Activated B cell treated with CpG ODN at 0.5 μM for 24 hours (primary cell): ENCODE measurements at regions of chr10 and their contacts with region 1.

Region 1: GRCh38 chr10:7410862-7411670 is at the start of gene SFMBT2:
- DNase-seq: peak; percentile 52
- ATAC-seq: peak; percentile 59
- H3K4me3 Mint-ChIP-seq: peak within 1 kb of the TSS; percentile 95
- H3K27ac Mint-ChIP-seq: peak within 1 kb of the TSS; percentile 71
- H3K4me1 Mint-ChIP-seq: peaks cover 36% of the 10 kb centered on the region
- H3K27me3 Mint-ChIP-seq: peaks cover 5% of the 10 kb centered on the region
- CTCF ChIP-seq: no peak
- total RNA-seq, gene SFMBT2: 18.7 and 19.2 TPM in 2 replicates

Region 2: DNA sequence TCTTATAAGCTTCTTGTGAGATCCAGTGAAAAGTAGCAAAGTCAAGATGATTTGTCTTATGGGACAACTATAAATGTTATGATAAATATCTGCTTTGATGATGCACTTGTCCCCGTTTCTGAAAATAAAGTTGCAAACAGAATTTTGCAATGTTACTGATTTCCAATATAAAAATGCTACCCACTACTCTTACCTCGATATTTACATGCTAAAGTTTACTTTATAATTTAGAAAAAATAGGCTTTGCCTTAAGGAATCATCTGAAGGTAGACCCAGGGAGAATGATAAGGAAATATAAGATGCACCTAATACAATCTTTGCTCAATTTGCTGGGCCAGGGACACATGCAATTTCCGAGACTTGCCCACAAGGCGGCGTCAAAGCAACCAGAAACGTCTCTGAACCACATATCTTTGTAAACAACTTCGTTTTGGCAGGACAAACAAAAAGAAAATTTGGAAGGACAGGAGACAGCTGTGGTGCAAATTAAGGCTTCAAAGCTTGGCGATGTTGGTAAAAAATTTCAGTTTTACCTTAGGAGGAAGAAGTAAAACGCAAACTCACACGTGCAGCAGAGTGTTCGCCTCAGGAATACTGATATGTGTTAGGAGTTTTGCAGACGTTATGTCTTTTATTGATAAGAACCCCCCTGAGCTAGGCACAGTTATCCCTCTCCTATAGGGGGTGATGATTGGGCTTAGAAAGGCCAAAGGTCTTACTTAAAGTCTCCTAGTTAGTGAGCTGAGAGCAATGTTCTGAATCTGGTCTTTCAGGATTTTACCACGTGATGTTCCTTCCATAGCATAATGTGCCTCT is 965.4 kb before region 1 on chr10:
- CTCF ChIA-PET with region 1: no interaction called
- POLR2A ChIA-PET with region 1: no interaction called
- intact Hi-C with region 1: loop called (anchors 10 kb)
- DNase-seq: no peak
- ATAC-seq: no peak
- H3K4me3 Mint-ChIP-seq: no peak overlapping the region
- H3K27ac Mint-ChIP-seq: no peak overlapping the region
- H3K4me1 Mint-ChIP-seq: peaks cover 2% of the 10 kb centered on the region
- H3K27me3 Mint-ChIP-seq: peaks cover 12% of the 10 kb centered on the region
- CTCF ChIP-seq: no peak

Region 3: GRCh38 chr10:6713716-6714115 is 697.4 kb before region 1 on chr10:
- CTCF ChIA-PET with region 1: no interaction called
- POLR2A ChIA-PET with region 1: no interaction called
- intact Hi-C with region 1: no loop called
- DNase-seq: no peak
- ATAC-seq: no peak
- H3K4me3 Mint-ChIP-seq: no peak overlapping the region
- H3K27ac Mint-ChIP-seq: no peak overlapping the region
- H3K4me1 Mint-ChIP-seq: no peaks in the 10 kb centered on the region
- H3K27me3 Mint-ChIP-seq: peaks cover 37% of the 10 kb centered on the region
- CTCF ChIP-seq: no peak

Region 4: DNA sequence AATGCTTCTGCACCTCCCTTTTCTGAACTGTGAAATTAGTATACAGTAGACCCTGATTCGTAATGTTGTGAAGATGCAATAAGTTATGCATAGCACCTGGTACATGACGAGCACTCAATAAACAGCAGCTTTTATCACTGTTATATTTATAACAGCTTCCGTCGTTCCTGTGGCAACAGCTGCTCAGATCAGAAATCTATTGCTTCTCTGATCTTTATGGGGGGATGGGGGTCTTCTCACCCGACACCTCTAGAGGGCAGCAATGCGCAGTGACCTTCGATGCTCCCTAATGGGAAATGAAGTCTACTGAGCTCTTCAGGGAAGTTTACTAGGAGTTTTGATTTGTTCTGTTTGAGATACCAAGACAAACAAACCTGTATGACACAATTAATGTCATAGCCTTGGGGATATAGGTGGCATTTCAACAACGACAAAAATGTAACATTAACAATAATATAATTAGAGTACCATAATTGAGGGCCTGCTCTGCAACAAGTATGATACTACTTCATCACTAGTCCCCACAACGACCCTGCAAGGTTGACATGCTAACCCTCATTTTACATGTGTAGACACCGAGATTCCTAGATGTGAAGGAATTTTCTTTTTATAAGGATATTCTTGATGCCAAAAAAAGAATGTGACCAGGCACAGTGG is 289.8 kb before region 1 on chr10:
- CTCF ChIA-PET with region 1: interaction called, 26 read pairs
- POLR2A ChIA-PET with region 1: no interaction called
- intact Hi-C with region 1: loop called (anchors 1 kb)
- DNase-seq: peak; percentile 43
- ATAC-seq: peak; percentile 85
- H3K4me3 Mint-ChIP-seq: no peak overlapping the region
- H3K27ac Mint-ChIP-seq: no peak overlapping the region
- H3K4me1 Mint-ChIP-seq: peaks cover 6% of the 10 kb centered on the region
- H3K27me3 Mint-ChIP-seq: peaks cover 3% of the 10 kb centered on the region
- CTCF ChIP-seq: peak; percentile 42

Region 5: DNA sequence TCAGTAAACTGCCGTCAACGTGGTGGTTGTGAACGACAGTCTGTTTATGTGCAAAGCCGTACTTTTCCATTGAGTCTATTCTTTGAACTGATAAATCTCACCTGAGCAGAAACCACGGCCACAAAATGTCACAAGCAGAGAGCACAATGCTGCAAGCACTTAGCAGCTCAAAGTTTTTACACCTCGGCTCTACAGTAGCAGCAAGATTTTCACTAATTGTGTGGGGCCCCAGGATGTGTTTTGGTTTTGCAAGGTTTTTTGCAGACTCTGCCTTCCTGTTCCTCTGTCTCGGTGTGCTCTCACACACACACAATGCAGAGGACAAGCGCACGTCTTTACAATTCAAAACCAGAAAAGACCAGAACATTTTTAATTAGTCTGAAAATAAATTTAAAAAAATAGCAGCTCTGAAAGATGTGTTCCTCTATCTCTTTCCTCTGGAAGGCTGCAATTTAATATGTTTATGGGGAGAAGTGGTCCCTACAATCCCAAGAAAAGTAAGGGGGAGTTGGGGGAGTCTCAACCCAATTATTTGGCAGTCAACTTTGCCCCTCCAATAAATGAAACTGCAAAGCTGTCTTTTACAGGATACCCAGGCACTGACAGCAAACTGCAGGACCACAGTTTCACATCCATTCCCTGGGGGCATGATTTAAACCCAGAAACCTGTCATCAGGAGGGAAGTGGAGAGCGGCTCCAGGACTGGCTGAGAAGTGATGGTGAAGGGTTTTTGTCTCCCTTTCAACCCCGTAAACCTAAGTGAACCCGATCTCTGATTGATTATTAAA is 73.6 kb after region 1 on chr10:
- CTCF ChIA-PET with region 1: no interaction called
- POLR2A ChIA-PET with region 1: interaction called, 6 read pairs
- intact Hi-C with region 1: loop called (anchors 2 kb)
- DNase-seq: no peak
- ATAC-seq: peak; percentile 32
- H3K4me3 Mint-ChIP-seq: peak overlapping the region; percentile 76
- H3K27ac Mint-ChIP-seq: peak overlapping the region; percentile 53
- H3K4me1 Mint-ChIP-seq: peaks cover 64% of the 10 kb centered on the region
- H3K27me3 Mint-ChIP-seq: no peaks in the 10 kb centered on the region
- CTCF ChIP-seq: no peak

Region 6: DNA sequence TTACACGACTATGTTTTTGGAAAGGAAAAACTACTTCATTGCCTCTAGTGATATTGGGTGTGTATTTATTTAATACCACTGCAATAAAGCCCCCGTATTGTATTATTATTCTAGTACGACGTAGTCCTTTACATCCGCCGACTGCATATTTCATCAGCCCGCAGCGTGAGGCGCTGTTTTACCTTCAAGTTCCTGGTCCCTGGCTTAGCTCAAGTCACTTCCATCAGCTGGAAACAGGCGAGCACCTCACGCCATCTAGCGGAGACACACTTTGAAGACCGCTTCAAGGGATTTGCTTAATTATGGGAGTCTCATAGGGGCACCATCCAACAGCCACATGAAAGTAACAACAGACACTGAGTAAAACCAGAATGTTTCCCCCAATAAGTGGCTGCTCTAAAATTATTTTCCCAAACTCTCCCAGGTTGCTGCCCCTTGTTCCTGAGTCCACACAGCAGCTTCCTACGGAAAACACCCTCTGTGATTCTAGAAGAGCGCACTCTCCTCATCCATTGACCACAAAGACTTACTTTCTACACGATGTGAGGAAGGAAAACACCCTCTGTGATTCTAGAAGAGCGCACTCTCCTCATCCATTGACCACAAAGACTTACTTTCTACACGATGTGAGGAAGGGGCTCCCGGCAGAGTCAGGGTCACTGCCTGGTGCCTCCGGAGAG is 276.3 kb after region 1 on chr10:
- CTCF ChIA-PET with region 1: interaction called, 7 read pairs
- POLR2A ChIA-PET with region 1: no interaction called
- intact Hi-C with region 1: loop called (anchors 2 kb)
- DNase-seq: peak; percentile 43
- ATAC-seq: peak; percentile 89
- H3K4me3 Mint-ChIP-seq: no peak overlapping the region
- H3K27ac Mint-ChIP-seq: no peak overlapping the region
- H3K4me1 Mint-ChIP-seq: peaks cover 4% of the 10 kb centered on the region
- H3K27me3 Mint-ChIP-seq: peaks cover 23% of the 10 kb centered on the region
- CTCF ChIP-seq: peak; percentile 35

Region 7: DNA sequence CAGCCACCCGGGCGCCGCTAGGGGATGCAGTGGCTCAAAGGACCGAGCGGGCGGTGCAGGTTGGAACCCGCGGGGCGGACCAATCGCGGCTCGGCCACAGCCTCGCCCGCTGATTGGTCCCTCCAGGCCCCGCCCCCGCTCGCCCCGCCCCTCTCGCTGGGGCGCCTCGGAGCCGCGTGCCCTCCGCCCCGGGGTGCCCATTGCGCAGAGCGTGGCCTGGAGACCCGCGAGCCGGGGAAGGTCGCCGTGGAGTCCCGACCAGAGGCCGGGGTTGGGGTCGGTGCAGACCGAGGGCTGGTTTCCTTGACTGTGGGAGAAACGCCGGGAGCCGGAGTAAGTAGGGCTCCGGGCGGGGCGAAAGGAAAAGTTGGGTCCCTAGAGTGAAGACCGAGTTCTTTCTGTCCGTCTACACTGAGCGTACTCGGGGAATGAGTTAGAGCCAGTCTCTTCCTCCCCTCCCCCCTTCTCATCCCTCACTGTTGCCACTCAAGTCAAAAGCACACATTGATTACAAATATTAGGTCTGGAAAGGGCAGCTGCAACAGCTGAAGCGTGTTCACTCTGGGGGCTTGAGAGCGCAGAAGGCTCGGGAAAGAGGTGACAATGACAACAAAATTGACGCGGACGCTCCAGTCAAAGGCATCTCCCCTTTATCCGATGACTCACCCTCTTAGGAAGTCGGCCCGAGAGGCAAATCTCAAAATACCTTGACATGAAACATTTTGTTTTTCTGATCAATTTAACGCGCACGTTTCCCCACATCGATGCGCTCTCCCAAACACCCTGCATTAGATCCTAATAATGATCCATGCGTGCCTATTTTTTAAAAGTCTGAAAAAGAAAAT is 642.6 kb after region 1 on chr10:
- CTCF ChIA-PET with region 1: no interaction called
- POLR2A ChIA-PET with region 1: no interaction called
- intact Hi-C with region 1: loop called (anchors 10 kb)
- DNase-seq: peak; percentile 52
- ATAC-seq: peak; percentile 79
- H3K4me3 Mint-ChIP-seq: peak overlapping the region; percentile 79
- H3K27ac Mint-ChIP-seq: peak overlapping the region; percentile 18
- H3K4me1 Mint-ChIP-seq: peaks cover 49% of the 10 kb centered on the region
- H3K27me3 Mint-ChIP-seq: peaks cover 41% of the 10 kb centered on the region
- CTCF ChIP-seq: no peak